Endothelial cell of umbilical vein (primary cell): ENCODE measurements at regions of chr1 and their contacts with region 1.

Region 1: GRCh38 chr1:115807723-115808122 is 33.2 kb downstream of the NHLH2 start:
- DNase-seq: peak; percentile 62
- H3K4me3 ChIP-seq: no peak overlapping the region
- H3K27ac ChIP-seq: no peak overlapping the region
- H3K4me1 ChIP-seq: peaks cover 14% of the 10 kb centered on the region
- H3K27me3 ChIP-seq: peaks cover 5 to 8% of the 10 kb centered on the region in 2 experiments
- CTCF ChIP-seq: peak; percentile 61 to 70
- POLR2A ChIP-seq: no peak

Region 2: GRCh38 chr1:115829023-115829693 is 21.4 kb after region 1 on chr1:
- CTCF ChIA-PET with region 1: interaction called, 6 read pairs
- POLR2A ChIA-PET with region 1: no interaction called
- dilution Hi-C with region 1: no loop called
- intact Hi-C with region 1: loop called (anchors 1 kb)
- DNase-seq: no peak
- H3K4me3 ChIP-seq: no peak overlapping the region
- H3K27ac ChIP-seq: no peak overlapping the region
- H3K4me1 ChIP-seq: peaks cover 4% of the 10 kb centered on the region
- H3K27me3 ChIP-seq: peaks cover 11 to 32% of the 10 kb centered on the region in 2 experiments
- CTCF ChIP-seq: no peak
- POLR2A ChIP-seq: no peak

Region 3: GRCh38 chr1:115879977-115880376 is 72.3 kb after region 1 on chr1:
- CTCF ChIA-PET with region 1: interaction called, 3 read pairs
- POLR2A ChIA-PET with region 1: no interaction called
- dilution Hi-C with region 1: no loop called
- intact Hi-C with region 1: loop called (anchors 1 kb)
- DNase-seq: no peak
- H3K4me3 ChIP-seq: no peak overlapping the region
- H3K27ac ChIP-seq: no peak overlapping the region
- H3K4me1 ChIP-seq: no peaks in the 10 kb centered on the region
- H3K27me3 ChIP-seq: no peaks in the 10 kb centered on the region
- CTCF ChIP-seq: no peak
- POLR2A ChIP-seq: no peak

Region 4: GRCh38 chr1:115898020-115898419 is 90.3 kb after region 1 on chr1:
- CTCF ChIA-PET with region 1: interaction called, 3 read pairs
- POLR2A ChIA-PET with region 1: no interaction called
- dilution Hi-C with region 1: no loop called
- intact Hi-C with region 1: loop called (anchors 5 kb)
- DNase-seq: no peak
- H3K4me3 ChIP-seq: no peak overlapping the region
- H3K27ac ChIP-seq: no peak overlapping the region
- H3K4me1 ChIP-seq: no peaks in the 10 kb centered on the region
- H3K27me3 ChIP-seq: peaks cover 0 to 1% of the 10 kb centered on the region in 2 experiments
- CTCF ChIP-seq: no peak
- POLR2A ChIP-seq: no peak

Region 5: GRCh38 chr1:115911324-115911723 is 103.6 kb after region 1 on chr1:
- CTCF ChIA-PET with region 1: no interaction called
- POLR2A ChIA-PET with region 1: no interaction called
- dilution Hi-C with region 1: no loop called
- intact Hi-C with region 1: no loop called
- DNase-seq: no peak
- H3K4me3 ChIP-seq: no peak overlapping the region
- H3K27ac ChIP-seq: no peak overlapping the region
- H3K4me1 ChIP-seq: no peaks in the 10 kb centered on the region
- H3K27me3 ChIP-seq: no peaks in the 10 kb centered on the region
- CTCF ChIP-seq: no peak
- POLR2A ChIP-seq: no peak

Region 6: DNA sequence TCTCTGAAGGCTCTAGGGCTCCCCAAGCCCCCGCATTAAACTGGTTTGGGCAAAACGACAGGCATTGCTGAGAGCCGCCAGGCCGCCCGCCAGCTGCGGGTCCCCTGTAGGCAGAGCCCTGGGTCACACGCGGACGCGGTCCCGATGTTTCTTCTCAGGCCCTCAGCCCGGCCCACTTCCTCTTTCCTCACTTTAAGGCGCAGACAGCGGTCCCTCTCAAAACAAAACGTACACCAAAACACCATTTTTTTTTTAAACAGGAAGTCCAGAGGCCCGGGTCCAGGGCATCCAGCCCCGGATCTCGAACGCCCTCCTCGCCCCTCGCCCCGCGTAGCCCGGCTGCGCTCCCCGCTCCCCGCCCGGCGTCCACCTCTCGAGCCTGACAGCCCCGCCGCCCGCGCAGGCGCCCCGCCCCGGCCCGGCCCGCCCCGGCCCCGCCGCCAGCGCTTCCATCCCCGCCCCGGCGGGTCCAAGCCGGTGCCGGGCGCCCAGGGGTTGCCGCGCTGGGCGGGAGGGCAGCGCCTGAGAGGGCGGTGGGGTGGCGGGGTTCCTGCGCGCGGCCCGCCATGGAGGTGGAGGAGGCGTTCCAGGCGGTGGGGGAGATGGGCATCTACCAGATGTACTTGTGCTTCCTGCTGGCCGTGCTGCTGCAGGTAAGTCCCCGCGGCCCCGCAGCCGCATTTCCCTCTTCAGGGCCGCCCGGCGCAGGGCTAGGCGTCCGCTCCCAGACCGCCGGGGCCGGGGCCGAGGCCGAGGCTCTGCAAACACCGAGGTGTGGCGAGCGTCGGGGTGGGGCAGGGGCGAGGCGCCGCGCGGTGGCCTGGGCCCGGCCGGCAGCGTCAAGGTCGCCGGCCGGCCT is 168.6 kb after region 1 on chr1 and contains the start of gene SLC22A15:
- CTCF ChIA-PET with region 1: interaction called, 133 read pairs
- POLR2A ChIA-PET with region 1: no interaction called
- dilution Hi-C with region 1: no loop called
- intact Hi-C with region 1: loop called (anchors 1 kb)
- DNase-seq: no peak
- H3K4me3 ChIP-seq: peak within 1 kb of the TSS; percentile 21 to 66 (median 41)
- H3K27ac ChIP-seq: no peak within 1 kb of the TSS
- H3K4me1 ChIP-seq: peaks cover 3% of the 10 kb centered on the region
- H3K27me3 ChIP-seq: peaks cover 23 to 51% of the 10 kb centered on the region in 2 experiments
- CTCF ChIP-seq: no peak
- POLR2A ChIP-seq: no peak
- total RNA-seq, gene SLC22A15: 0.44 TPM in 1 of 2 replicates, not detected in the other

Region 7: DNA sequence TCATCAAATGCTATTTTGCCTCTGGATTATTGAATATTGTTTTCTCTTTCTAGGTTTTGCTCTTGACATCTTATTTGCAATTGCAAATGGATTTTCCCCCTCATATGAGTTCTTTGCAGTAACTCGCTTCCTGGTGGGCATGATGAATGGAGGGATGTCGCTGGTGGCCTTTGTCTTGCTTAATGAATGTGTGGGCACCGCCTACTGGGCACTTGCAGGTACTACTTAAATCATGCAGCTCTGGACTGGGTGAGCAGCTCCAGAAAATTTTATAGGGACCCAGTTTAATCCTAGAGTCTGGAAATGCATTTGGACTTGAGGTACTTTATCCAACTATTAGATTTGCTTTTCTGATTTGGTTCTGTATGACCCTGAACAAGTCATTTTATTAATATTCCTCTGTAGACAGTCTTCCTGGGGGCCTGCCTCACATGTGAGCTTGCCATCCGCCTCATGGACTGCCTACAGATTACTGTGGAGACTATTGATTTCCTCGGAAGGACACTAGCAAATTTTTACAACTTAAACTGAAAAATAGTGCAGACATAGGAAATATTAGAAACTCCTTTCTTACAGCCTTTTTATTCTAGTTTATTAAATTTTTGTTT is 213.0 kb after region 1 on chr1:
- CTCF ChIA-PET with region 1: interaction called, 83 read pairs
- POLR2A ChIA-PET with region 1: no interaction called
- dilution Hi-C with region 1: no loop called
- intact Hi-C with region 1: loop called (anchors 1 kb)
- DNase-seq: peak; percentile 52
- H3K4me3 ChIP-seq: no peak overlapping the region
- H3K27ac ChIP-seq: no peak overlapping the region
- H3K4me1 ChIP-seq: no peaks in the 10 kb centered on the region
- H3K27me3 ChIP-seq: no peaks in the 10 kb centered on the region
- CTCF ChIP-seq: peak; percentile 61 to 66
- POLR2A ChIP-seq: no peak